MCF 10A (cell line): ENCODE measurements at regions of chrX and their contacts with region 1.

Region 1: DNA sequence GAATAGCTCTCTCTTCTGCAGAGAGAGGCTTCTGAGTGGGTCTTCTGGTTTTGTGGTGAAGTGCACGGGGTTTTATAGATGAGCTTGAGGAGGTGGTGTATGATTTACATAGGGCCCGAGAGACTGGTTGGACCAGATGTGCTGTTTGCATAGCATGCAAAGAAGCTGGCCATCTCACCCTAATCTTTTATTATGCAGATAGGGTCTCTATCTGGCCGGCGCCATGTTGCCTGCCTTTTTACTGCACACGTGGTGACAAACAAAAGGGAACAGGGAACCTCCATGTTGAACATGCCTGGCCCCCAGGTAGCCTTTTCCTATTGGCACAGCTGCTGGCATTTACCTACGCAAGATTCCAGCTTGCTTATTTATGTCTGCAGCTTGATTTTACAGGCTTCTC is 473.3 kb upstream of the FAM47C start:
- DNase-seq: no peak
- H3K4me3 Mint-ChIP-seq: no peak overlapping the region
- H3K27ac Mint-ChIP-seq: no peak overlapping the region
- H3K4me1 Mint-ChIP-seq: peaks cover 7% of the 10 kb centered on the region
- H3K27me3 Mint-ChIP-seq: no peaks in the 10 kb centered on the region
- CTCF ChIP-seq: no peak

Region 2: DNA sequence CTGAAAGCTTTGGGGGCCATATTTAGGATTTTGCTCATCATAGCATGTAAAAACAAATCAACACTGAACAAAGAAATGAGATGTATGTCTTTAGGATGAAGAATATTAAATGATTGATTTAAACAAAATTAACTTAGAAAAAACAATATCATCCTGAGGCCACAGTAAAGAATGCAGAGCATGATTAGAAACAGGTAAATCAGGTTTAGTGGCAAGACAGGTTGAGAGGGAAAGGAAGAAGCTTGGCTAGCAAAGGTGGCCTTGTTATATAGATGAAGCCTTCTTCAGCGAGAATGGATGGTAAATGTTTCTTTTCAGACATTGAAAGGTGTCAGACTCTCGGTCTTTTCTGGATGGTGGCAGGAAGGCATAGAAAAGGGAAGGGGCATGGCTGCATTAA is 748.6 kb before region 1 on chrX:
- CTCF ChIA-PET with region 1: no interaction called
- POLR2A ChIA-PET with region 1: no interaction called
- intact Hi-C with region 1: loop called (anchors 5 kb)
- DNase-seq: no peak
- H3K4me3 Mint-ChIP-seq: no peak overlapping the region
- H3K27ac Mint-ChIP-seq: no peak overlapping the region
- H3K4me1 Mint-ChIP-seq: no peaks in the 10 kb centered on the region
- H3K27me3 Mint-ChIP-seq: peaks cover 33% of the 10 kb centered on the region
- CTCF ChIP-seq: no peak